ENCODE measurements at regions of chr5 and their contacts with region 1.

Region 1: GRCh38 chr5:14757850-14758249 is 93.3 kb downstream of the OTULIN start:
- DNase-seq: no peak
- CTCF ChIP-seq: no peak

Region 2: GRCh38 chr5:14767735-14768507 is 10.1 kb after region 1 on chr5:
- CTCF ChIA-PET with region 1: interaction called, 14 read pairs
- POLR2A ChIA-PET with region 1: no interaction called
- DNase-seq: no peak
- CTCF ChIP-seq: no peak

Measured in GM10248 (cell line).